ENCODE measurements at regions of chr3 and their contacts with region 1.

Region 1: GRCh38 chr3:108914774-108915641 is 38.7 kb downstream of the GUCA1C start:
- DNase-seq: peak; percentile 72
- H3K4me3 Mint-ChIP-seq: peak overlapping the region; percentile 19
- H3K27ac Mint-ChIP-seq: peak overlapping the region; percentile 40
- H3K4me1 Mint-ChIP-seq: peaks cover 14% of the 10 kb centered on the region
- H3K27me3 Mint-ChIP-seq: peaks cover 17% of the 10 kb centered on the region

Region 2: GRCh38 chr3:108602249-108602934 is 312.6 kb before region 1 on chr3:
- CTCF ChIA-PET with region 1: interaction called, 11 read pairs
- POLR2A ChIA-PET with region 1: no interaction called
- DNase-seq: peak; percentile 43
- H3K4me3 Mint-ChIP-seq: peak overlapping the region; percentile 45
- H3K27ac Mint-ChIP-seq: peak overlapping the region; percentile 53
- H3K4me1 Mint-ChIP-seq: peaks cover 58% of the 10 kb centered on the region
- H3K27me3 Mint-ChIP-seq: no peaks in the 10 kb centered on the region

Region 3: DNA sequence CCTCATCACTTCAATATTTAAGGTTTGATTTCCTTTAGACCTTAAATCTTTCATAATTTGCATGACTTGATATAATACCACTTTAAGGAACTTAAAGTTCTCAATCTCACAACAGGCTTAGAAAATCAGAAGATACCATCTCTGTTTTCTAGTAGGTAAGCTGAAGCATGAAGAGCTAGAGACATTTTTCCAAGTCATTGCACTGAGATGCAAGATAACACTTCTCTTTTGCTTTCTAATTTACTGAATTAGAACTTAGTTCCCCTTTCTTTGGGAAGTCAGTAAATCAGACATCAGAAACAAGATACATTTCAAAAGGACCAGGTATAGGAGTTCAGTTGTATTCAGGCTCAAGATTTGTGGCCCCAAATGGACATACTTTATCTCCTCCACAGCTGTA is 245.8 kb before region 1 on chr3:
- CTCF ChIA-PET with region 1: interaction called, 72 read pairs
- POLR2A ChIA-PET with region 1: no interaction called
- DNase-seq: no peak
- H3K4me3 Mint-ChIP-seq: no peak overlapping the region
- H3K27ac Mint-ChIP-seq: no peak overlapping the region
- H3K4me1 Mint-ChIP-seq: peaks cover 19% of the 10 kb centered on the region
- H3K27me3 Mint-ChIP-seq: no peaks in the 10 kb centered on the region

Region 4: GRCh38 chr3:108806316-108806715 is 108.7 kb before region 1 on chr3:
- CTCF ChIA-PET with region 1: interaction called, 13 read pairs
- POLR2A ChIA-PET with region 1: interaction called, 8 read pairs
- DNase-seq: peak; percentile 59
- H3K4me3 Mint-ChIP-seq: peak overlapping the region; percentile 12
- H3K27ac Mint-ChIP-seq: peak overlapping the region; percentile 92
- H3K4me1 Mint-ChIP-seq: peaks cover 36% of the 10 kb centered on the region
- H3K27me3 Mint-ChIP-seq: no peaks in the 10 kb centered on the region

Region 5: GRCh38 chr3:108835101-108835500 is 79.9 kb before region 1 on chr3:
- CTCF ChIA-PET with region 1: interaction called, 16 read pairs
- POLR2A ChIA-PET with region 1: interaction called, 8 read pairs
- DNase-seq: peak; percentile 40
- H3K4me3 Mint-ChIP-seq: peak overlapping the region; percentile 77
- H3K27ac Mint-ChIP-seq: peak overlapping the region; percentile 95
- H3K4me1 Mint-ChIP-seq: peaks cover 81% of the 10 kb centered on the region
- H3K27me3 Mint-ChIP-seq: no peaks in the 10 kb centered on the region

Region 6: GRCh38 chr3:109117939-109118338 is 202.9 kb after region 1 on chr3 and contains the start of gene MORC1:
- CTCF ChIA-PET with region 1: no interaction called
- POLR2A ChIA-PET with region 1: no interaction called
- DNase-seq: no peak
- H3K4me3 Mint-ChIP-seq: no peak within 1 kb of the TSS
- H3K27ac Mint-ChIP-seq: no peak within 1 kb of the TSS
- H3K4me1 Mint-ChIP-seq: no peaks in the 10 kb centered on the region
- H3K27me3 Mint-ChIP-seq: peaks cover 5% of the 10 kb centered on the region
- total RNA-seq, gene MORC1: not detected

Measured in activated CD4-positive, alpha-beta memory T cell treated with anti-CD3 and anti-CD28 coated beads, Interleukin-2, amount 10 ng/mL, durations not matched to agents 7 days and 5 days (primary cell).